Activated CD4-positive, alpha-beta memory T cell treated with anti-CD3 and anti-CD28 coated beads, Interleukin-2, amount 10 ng/mL, durations not matched to agents 7 days and 5 days (primary cell): ENCODE measurements at regions of chr17 and their contacts with region 1.

Region 1: DNA sequence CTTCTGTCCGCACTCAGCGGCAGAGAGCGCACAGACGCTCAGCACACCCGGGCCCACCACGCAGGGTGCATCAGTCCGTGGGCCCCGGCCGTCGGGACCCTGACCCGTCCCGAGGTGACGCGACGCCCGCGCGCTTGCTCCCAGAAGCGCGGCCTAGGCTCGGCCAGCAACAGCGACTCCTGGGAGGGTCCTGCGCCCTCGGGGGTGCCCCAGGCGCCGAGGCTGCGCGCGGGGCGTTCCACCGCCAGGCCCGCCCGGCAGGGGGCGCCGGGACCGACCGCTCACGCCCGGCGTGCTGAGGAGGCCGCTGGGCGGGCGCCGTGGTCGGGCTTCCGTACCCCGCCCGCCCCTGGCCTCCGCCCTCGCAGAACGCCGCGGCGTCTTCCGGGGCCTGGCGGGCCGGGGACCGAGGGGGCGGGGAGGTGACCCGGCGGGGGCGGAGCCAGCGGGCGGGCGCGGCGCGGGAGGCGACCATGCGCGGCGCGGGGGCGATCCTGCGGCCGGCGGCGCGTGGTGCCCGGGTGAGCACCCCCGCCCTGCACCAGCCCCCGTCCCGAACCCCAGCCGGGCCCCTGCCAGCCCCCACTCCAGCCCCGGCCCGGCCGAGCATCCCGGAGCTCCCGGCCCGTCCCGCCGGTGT is at the start of gene CISD3:
- DNase-seq: peak; percentile 90
- H3K4me3 Mint-ChIP-seq: peak within 1 kb of the TSS; percentile 99
- H3K27ac Mint-ChIP-seq: peak within 1 kb of the TSS; percentile 100
- H3K4me1 Mint-ChIP-seq: peaks cover 78% of the 10 kb centered on the region
- H3K27me3 Mint-ChIP-seq: no peaks in the 10 kb centered on the region
- total RNA-seq, gene CISD3: 42.8 to 48.6 TPM

Region 2: GRCh38 chr17:38697061-38697820 is 32.8 kb before region 1 on chr17:
- CTCF ChIA-PET with region 1: interaction called, 12 read pairs
- POLR2A ChIA-PET with region 1: interaction called, 419 read pairs
- DNase-seq: no peak
- H3K4me3 Mint-ChIP-seq: no peak overlapping the region
- H3K27ac Mint-ChIP-seq: peak overlapping the region; percentile 78
- H3K4me1 Mint-ChIP-seq: peaks cover 44% of the 10 kb centered on the region
- H3K27me3 Mint-ChIP-seq: no peaks in the 10 kb centered on the region

Region 3: DNA sequence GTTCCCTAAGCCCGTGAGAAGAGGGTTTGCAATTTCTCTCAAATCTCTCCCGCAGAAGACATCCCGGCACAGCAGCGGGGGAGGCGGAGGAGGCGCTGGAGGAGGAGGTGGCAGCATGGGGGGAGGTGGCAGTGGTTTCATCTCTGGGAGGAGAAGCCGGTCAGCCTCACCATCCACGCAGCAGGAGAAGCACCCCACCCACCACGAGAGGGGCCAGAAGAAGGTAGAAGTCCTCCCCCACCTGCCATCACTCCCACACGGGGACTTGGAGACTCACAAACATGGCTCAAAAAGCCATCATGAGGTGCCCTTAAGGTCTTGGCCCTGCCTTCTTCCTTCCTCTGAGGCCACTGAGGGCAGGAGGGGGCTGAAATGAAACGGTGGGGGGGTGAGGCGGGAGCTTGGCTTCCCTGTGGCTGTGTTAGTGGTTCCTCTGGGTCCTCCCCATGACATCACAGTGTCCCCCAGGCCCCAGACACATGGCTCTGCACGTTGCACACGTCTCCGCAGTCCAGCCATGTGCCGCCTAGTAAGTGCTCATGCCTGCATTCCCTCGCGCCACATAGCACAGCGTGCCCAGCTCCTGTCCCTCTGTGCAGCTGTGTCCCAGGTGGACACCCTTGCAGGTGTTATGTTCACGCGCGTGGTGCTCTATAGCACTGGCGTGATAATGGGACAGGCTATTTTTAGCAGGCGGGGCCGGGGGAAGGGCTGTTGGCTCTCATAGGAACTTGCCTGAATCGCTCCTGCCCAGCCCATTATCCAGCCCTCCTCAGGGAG is 18.0 kb before region 1 on chr17:
- CTCF ChIA-PET with region 1: interaction called, 17 read pairs
- POLR2A ChIA-PET with region 1: interaction called, 419 read pairs
- DNase-seq: no peak
- H3K4me3 Mint-ChIP-seq: no peak overlapping the region
- H3K27ac Mint-ChIP-seq: no peak overlapping the region
- H3K4me1 Mint-ChIP-seq: peaks cover 68% of the 10 kb centered on the region
- H3K27me3 Mint-ChIP-seq: no peaks in the 10 kb centered on the region

Region 4: DNA sequence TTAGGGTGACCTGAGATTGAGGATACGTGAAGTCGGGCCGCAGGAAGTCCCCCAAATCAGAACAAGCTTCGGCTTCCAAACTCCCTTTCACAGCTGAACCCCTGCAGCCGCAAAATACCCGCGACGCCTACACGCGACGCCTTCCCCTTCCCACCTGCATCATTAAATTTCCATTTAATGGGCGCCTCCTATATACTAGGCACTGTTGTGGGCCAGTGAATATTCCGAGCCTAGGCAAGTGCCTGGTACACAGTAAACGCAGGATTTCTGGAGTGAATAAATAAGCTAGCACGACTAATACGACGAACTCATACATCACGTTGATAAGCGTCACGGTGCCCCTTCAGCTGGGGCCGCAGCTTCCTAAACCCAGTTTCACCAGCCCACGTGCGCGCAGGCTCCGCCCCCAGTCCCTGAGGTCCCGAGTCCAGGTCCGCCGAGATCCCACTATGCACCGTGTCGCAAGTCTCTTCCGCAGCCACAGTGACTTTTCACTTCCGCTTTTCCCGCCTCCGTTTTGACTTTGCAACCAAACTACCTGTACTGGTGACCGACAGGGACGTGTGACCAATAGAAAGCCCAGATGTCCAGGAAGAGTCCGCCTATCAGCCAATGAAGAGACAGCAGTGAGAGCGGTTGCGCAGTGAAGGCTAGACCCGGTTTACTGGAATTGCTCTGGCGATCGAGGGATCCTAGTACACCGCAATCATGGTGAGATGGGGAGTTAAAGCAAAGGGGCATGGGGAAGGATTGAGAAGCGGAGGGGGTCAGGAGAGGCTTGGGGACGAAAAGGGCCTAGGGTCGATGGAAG is 22.3 kb after region 1 on chr17 and contains the start of gene PSMB3:
- CTCF ChIA-PET with region 1: interaction called, 15 read pairs
- POLR2A ChIA-PET with region 1: interaction called, 14 read pairs
- DNase-seq: peak; percentile 97
- H3K4me3 Mint-ChIP-seq: peak within 1 kb of the TSS; percentile 97
- H3K27ac Mint-ChIP-seq: peak within 1 kb of the TSS; percentile 94
- H3K4me1 Mint-ChIP-seq: peaks cover 47% of the 10 kb centered on the region
- H3K27me3 Mint-ChIP-seq: peaks cover 28% of the 10 kb centered on the region
- total RNA-seq, gene PSMB3: 241 to 242 TPM